K562 (cell line): ENCODE measurements at regions of chr1 and their contacts with region 1.

Region 1: GRCh38 chr1:112904071-112904830 is 51.7 kb downstream of the SLC16A1 start:
- DNase-seq: peak in 2 of 4 experiments; percentile 72 to 93
- ATAC-seq: peak; percentile 86
- H3K4me3 ChIP-seq: no peak overlapping the region
- H3K27ac ChIP-seq: peak overlapping the region; percentile 62; the same call in 2 of the 3 replicates
- H3K4me1 ChIP-seq: peaks cover 11 to 32% of the 10 kb centered on the region in 2 experiments; a peak in 4 of 5 replicates
- H3K27me3 ChIP-seq: no peaks in the 10 kb centered on the region
- CTCF ChIP-seq: no peak
- EP300 ChIP-seq: peak; percentile 61; the same call in 1 of the 2 replicates
- POLR2A ChIP-seq: no peak
- RAD21 ChIP-seq: no peak

Region 2: GRCh38 chr1:112674439-112674985 is 229.7 kb before region 1 on chr1 and contains the start of gene MOV10:
- CTCF ChIA-PET with region 1: no interaction called
- POLR2A ChIA-PET with region 1: no interaction called
- in situ Hi-C with region 1: no loop called
- intact Hi-C with region 1: no loop called
- DNase-seq: peak; percentile 85 to 92 (median 90)
- ATAC-seq: peak; percentile 79
- H3K4me3 ChIP-seq: peak within 1 kb of the TSS; percentile 71
- H3K27ac ChIP-seq: peak within 1 kb of the TSS; percentile 86
- H3K4me1 ChIP-seq: peaks cover 18 to 42% of the 10 kb centered on the region in 2 experiments
- H3K27me3 ChIP-seq: no peaks in the 10 kb centered on the region
- CTCF ChIP-seq: no peak
- EP300 ChIP-seq: no peak
- POLR2A ChIP-seq: peak; percentile 87
- RAD21 ChIP-seq: 0 out of 4 replicates have a peak, but pooled peaks of 1 of the 2 experiments have one; percentile 7
- polyA plus RNA-seq, gene MOV10: 16.7 to 39.6 TPM

Region 3: GRCh38 chr1:112893288-112894009 is 10.8 kb before region 1 on chr1:
- CTCF ChIA-PET with region 1: no interaction called
- POLR2A ChIA-PET with region 1: interaction called, 14 read pairs
- in situ Hi-C with region 1: no loop called
- intact Hi-C with region 1: no loop called
- DNase-seq: peak in 2 of 4 experiments; percentile 54 to 75
- ATAC-seq: peak; percentile 70
- H3K4me3 ChIP-seq: no peak overlapping the region
- H3K27ac ChIP-seq: peak overlapping the region; percentile 36; the same call in 2 of the 3 replicates
- H3K4me1 ChIP-seq: peaks cover 17 to 19% of the 10 kb centered on the region in 2 experiments; a peak in 4 of 5 replicates
- H3K27me3 ChIP-seq: no peaks in the 10 kb centered on the region
- CTCF ChIP-seq: no peak
- EP300 ChIP-seq: peak; percentile 83
- POLR2A ChIP-seq: no peak
- RAD21 ChIP-seq: no peak

Region 4: DNA sequence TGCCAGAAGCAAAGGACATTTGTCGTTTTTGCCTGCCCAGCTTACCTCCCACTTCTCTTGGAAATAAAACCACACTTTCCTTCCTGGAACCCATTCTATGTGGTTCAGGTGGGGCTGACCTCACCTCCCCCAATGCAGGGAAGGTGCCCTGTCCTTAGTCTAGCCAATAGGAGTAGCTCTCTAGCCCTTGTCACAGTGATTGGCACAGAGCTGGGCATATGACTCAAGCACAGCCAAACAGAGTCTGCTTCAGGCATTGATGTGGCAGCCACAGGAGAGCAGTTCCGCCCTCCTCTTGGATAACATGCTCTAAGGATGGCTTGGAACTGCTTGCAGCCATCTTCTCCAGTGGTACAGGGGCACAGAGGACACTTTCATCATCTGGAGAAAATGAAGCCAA is 302.8 kb after region 1 on chr1:
- CTCF ChIA-PET with region 1: no interaction called
- POLR2A ChIA-PET with region 1: no interaction called
- in situ Hi-C with region 1: no loop called
- intact Hi-C with region 1: no loop called
- DNase-seq: peak in 2 of 4 experiments; percentile 29 to 37
- ATAC-seq: no peak; the same call in 2 of the 3 replicates
- H3K4me3 ChIP-seq: no peak overlapping the region
- H3K27ac ChIP-seq: 0 out of 3 replicates have a peak overlapping the region, but pooled peaks have one; percentile 4
- H3K4me1 ChIP-seq: peaks cover 36 to 43% of the 10 kb centered on the region in 2 experiments
- H3K27me3 ChIP-seq: no peaks in the 10 kb centered on the region
- CTCF ChIP-seq: no peak
- EP300 ChIP-seq: peak; percentile 40; the same call in 1 of the 2 replicates
- POLR2A ChIP-seq: no peak
- RAD21 ChIP-seq: no peak